ENCODE measurements at regions of chr16 and their contacts with region 1.

Region 1: DNA sequence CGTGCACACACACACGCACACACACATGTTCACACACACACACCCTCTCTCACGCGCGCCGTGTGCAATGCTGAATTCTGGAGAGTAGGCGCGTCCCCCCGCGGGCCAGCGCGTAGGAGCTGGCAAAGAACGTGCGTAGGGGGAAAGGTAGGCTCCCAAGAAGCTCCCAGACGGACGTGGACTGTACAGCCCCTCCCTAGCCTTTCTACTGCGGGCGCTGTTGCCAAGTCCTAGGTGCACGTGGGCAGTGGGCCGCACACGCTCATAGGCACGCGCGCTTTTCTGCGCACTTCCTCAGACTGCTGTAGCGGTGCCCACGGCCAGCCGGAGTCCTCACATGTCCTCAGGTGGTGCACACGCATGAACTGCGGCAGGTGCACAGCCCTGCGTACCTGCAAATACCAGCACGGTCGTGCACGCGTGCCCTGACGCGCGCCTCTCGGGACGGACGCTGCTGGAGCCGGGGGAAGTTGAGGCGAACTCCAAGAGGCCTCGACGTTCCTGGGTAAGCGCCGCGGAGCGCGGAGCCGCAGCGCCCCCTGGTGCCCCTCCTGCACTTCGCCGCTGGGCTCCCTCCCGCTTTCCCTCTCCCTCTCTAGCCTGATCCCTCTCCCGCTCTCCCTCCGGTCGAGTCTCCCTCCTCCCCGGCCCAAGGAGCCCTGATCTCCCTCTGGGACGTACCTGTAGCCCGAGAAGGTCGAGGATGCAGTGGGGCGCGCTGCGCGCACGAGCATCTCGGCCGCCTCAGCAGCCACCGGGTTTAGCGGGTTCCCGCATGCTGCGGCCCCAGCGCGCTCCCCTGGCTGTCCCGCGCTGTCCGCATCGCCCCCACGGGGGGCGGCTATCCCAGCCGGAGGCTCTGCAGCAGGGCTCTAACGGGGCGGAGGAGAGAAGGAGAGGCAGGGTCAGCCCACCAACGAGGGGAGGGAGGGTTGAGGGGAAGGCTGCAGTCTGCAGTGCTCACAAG is 749 bp downstream of the GRIN2A start:
- DNase-seq: peak; percentile 60
- ATAC-seq: peak; percentile 90
- H3K4me3 ChIP-seq: peak overlapping the region; percentile 54 to 68
- H3K27ac ChIP-seq: peak overlapping the region; percentile 63
- H3K4me1 ChIP-seq: peaks cover 7% of the 10 kb centered on the region
- H3K27me3 ChIP-seq: no peaks in the 10 kb centered on the region
- CTCF ChIP-seq: peak; percentile 95

Region 2: GRCh38 chr16:9154567-9155410 is 1026.7 kb before region 1 on chr16:
- CTCF ChIA-PET with region 1: no interaction called
- POLR2A ChIA-PET with region 1: interaction called, 11 read pairs
- in situ Hi-C with region 1: no loop called
- intact Hi-C with region 1: no loop called
- DNase-seq: no peak
- ATAC-seq: peak; percentile 52; the same call in 1 of the 2 replicates
- H3K4me3 ChIP-seq: no peak overlapping the region
- H3K27ac ChIP-seq: no peak overlapping the region
- H3K4me1 ChIP-seq: no peaks in the 10 kb centered on the region
- H3K27me3 ChIP-seq: no peaks in the 10 kb centered on the region
- CTCF ChIP-seq: no peak

Region 3: GRCh38 chr16:9260666-9261065 is 920.8 kb before region 1 on chr16:
- CTCF ChIA-PET with region 1: no interaction called
- POLR2A ChIA-PET with region 1: no interaction called
- in situ Hi-C with region 1: no loop called
- intact Hi-C with region 1: loop called (anchors 10 kb)
- DNase-seq: no peak
- ATAC-seq: no peak
- H3K4me3 ChIP-seq: no peak overlapping the region
- H3K27ac ChIP-seq: no peak overlapping the region
- H3K4me1 ChIP-seq: no peaks in the 10 kb centered on the region
- H3K27me3 ChIP-seq: no peaks in the 10 kb centered on the region; the same call in 1 of the 2 replicates
- CTCF ChIP-seq: no peak

Region 4: GRCh38 chr16:9647981-9648712 is 533.3 kb before region 1 on chr16:
- CTCF ChIA-PET with region 1: no interaction called
- POLR2A ChIA-PET with region 1: no interaction called
- in situ Hi-C with region 1: no loop called
- intact Hi-C with region 1: loop called (anchors 5 kb)
- DNase-seq: peak; percentile 24
- ATAC-seq: peak; percentile 86
- H3K4me3 ChIP-seq: no peak overlapping the region
- H3K27ac ChIP-seq: no peak overlapping the region; the same call in 1 of the 2 replicates
- H3K4me1 ChIP-seq: no peaks in the 10 kb centered on the region
- H3K27me3 ChIP-seq: no peaks in the 10 kb centered on the region
- CTCF ChIP-seq: peak; percentile 85

Region 5: DNA sequence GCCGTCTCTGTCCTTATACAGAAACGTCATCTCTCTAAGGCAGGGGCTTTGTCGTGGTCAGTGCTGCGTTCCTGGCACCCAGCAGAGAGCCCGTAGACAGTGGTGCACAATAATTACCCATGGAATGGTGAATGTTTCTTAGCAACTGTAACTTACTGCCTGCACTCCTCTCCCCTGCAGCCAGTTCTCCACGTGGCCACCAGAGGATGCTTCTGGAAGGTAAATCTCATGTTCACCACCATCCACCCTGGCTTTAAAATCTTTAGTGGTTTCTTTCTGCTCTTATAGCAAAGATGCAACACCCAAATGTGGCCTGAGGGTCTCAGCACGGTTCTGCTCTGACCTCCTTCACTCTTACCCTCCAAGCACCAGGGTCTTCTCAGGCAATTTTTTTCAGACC is 150.0 kb before region 1 on chr16:
- CTCF ChIA-PET with region 1: no interaction called
- POLR2A ChIA-PET with region 1: no interaction called
- in situ Hi-C with region 1: no loop called
- intact Hi-C with region 1: loop called (anchors 5 kb)
- DNase-seq: no peak
- ATAC-seq: 0 out of 2 replicates have a peak, but pooled peaks have one; percentile 52
- H3K4me3 ChIP-seq: no peak overlapping the region
- H3K27ac ChIP-seq: no peak overlapping the region
- H3K4me1 ChIP-seq: no peaks in the 10 kb centered on the region
- H3K27me3 ChIP-seq: no peaks in the 10 kb centered on the region
- CTCF ChIP-seq: peak; percentile 57

Measured in Panc1 (cell line).